Activated CD4-positive, alpha-beta memory T cell treated with anti-CD3 and anti-CD28 coated beads for 36 hours (primary cell): ENCODE measurements at regions of chr18 and their contacts with region 1.

Region 1: GRCh38 chr18:79523736-79524180 is 128.0 kb downstream of the NFATC1 start:
- DNase-seq: peak; percentile 88
- H3K4me3 Mint-ChIP-seq: peak overlapping the region; percentile 75
- H3K27ac Mint-ChIP-seq: peak overlapping the region; percentile 99
- H3K4me1 Mint-ChIP-seq: peaks cover 63% of the 10 kb centered on the region
- H3K27me3 Mint-ChIP-seq: no peaks in the 10 kb centered on the region

Region 2: GRCh38 chr18:79400091-79400590 is 123.6 kb before region 1 on chr18:
- CTCF ChIA-PET with region 1: interaction called, 22 read pairs
- POLR2A ChIA-PET with region 1: interaction called, 63 read pairs
- intact Hi-C with region 1: loop called (anchors 1 kb)
- DNase-seq: peak; percentile 78
- H3K4me3 Mint-ChIP-seq: peak overlapping the region; percentile 41
- H3K27ac Mint-ChIP-seq: no peak overlapping the region
- H3K4me1 Mint-ChIP-seq: peaks cover 50% of the 10 kb centered on the region
- H3K27me3 Mint-ChIP-seq: no peaks in the 10 kb centered on the region

Region 3: GRCh38 chr18:79405781-79406575 is 117.8 kb before region 1 on chr18:
- CTCF ChIA-PET with region 1: interaction called, 12 read pairs
- POLR2A ChIA-PET with region 1: interaction called, 23 read pairs
- intact Hi-C with region 1: loop called (anchors 1 kb)
- DNase-seq: peak; percentile 94
- H3K4me3 Mint-ChIP-seq: peak overlapping the region; percentile 69
- H3K27ac Mint-ChIP-seq: peak overlapping the region; percentile 94
- H3K4me1 Mint-ChIP-seq: peaks cover 55% of the 10 kb centered on the region
- H3K27me3 Mint-ChIP-seq: no peaks in the 10 kb centered on the region

Region 4: GRCh38 chr18:79434607-79435401 is 89.0 kb before region 1 on chr18:
- CTCF ChIA-PET with region 1: interaction called, 19 read pairs
- POLR2A ChIA-PET with region 1: interaction called, 26 read pairs
- intact Hi-C with region 1: loop called (anchors 1 kb)
- DNase-seq: no peak
- H3K4me3 Mint-ChIP-seq: no peak overlapping the region
- H3K27ac Mint-ChIP-seq: no peak overlapping the region
- H3K4me1 Mint-ChIP-seq: peaks cover 60% of the 10 kb centered on the region
- H3K27me3 Mint-ChIP-seq: no peaks in the 10 kb centered on the region

Region 5: GRCh38 chr18:79507076-79507545 is 16.6 kb before region 1 on chr18:
- CTCF ChIA-PET with region 1: interaction called, 15 read pairs
- POLR2A ChIA-PET with region 1: interaction called, 15 read pairs
- intact Hi-C with region 1: loop called (anchors 1 kb)
- DNase-seq: peak; percentile 42
- H3K4me3 Mint-ChIP-seq: peak overlapping the region; percentile 37
- H3K27ac Mint-ChIP-seq: peak overlapping the region; percentile 75
- H3K4me1 Mint-ChIP-seq: peaks cover 60% of the 10 kb centered on the region
- H3K27me3 Mint-ChIP-seq: no peaks in the 10 kb centered on the region

Region 6: DNA sequence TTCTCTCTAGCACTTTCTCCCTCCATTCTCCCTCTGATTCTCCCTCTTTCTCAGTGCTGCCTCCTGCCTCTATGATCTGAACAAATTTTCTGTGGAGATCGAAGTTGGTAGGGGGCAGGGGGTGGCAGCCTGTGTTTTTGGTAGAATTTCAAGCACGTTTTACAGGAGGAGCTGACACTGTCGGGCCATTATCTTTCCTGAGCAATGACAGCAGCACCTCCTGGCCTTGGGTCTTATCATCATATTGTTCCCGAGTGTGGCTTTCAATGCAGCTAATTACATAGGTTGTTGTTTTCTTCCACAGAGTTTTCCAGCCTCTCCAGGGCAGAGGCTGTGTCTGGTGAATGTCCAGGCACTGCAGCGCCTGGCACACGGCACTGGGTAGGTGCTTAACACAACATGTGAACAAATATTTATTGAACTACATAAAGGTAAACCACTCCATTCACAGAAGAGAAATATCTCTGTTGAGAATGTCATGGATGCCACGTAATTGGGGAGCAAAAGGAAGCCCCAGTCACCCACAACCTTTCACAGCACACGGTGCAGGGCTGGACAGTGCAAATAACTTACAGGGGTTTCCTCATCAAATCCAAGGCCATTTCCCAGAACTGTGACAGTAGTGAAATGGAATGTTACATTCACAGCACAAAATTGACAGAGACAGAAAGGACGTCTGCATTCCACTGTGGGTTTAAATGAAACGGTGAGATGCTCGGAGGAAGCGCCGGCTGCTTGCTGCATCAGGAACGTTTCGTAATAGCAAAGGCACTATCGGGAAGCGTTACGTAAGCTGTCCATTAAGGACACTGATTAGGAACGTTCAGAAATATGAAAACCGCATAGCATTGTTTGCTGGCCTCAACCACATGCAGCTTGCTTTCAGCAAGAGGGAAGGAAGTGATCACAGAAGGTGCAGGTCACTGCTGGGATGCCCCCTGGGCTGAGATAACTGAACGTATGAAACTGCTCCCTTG is 267.5 kb after region 1 on chr18:
- CTCF ChIA-PET with region 1: no interaction called
- POLR2A ChIA-PET with region 1: no interaction called
- intact Hi-C with region 1: no loop called
- DNase-seq: no peak
- H3K4me3 Mint-ChIP-seq: no peak overlapping the region
- H3K27ac Mint-ChIP-seq: no peak overlapping the region
- H3K4me1 Mint-ChIP-seq: peaks cover 7% of the 10 kb centered on the region
- H3K27me3 Mint-ChIP-seq: peaks cover 62% of the 10 kb centered on the region